Uterus (tissue), 4 donors: ENCODE measurements at regions of chr12 and their contacts with region 1.

Region 1: DNA sequence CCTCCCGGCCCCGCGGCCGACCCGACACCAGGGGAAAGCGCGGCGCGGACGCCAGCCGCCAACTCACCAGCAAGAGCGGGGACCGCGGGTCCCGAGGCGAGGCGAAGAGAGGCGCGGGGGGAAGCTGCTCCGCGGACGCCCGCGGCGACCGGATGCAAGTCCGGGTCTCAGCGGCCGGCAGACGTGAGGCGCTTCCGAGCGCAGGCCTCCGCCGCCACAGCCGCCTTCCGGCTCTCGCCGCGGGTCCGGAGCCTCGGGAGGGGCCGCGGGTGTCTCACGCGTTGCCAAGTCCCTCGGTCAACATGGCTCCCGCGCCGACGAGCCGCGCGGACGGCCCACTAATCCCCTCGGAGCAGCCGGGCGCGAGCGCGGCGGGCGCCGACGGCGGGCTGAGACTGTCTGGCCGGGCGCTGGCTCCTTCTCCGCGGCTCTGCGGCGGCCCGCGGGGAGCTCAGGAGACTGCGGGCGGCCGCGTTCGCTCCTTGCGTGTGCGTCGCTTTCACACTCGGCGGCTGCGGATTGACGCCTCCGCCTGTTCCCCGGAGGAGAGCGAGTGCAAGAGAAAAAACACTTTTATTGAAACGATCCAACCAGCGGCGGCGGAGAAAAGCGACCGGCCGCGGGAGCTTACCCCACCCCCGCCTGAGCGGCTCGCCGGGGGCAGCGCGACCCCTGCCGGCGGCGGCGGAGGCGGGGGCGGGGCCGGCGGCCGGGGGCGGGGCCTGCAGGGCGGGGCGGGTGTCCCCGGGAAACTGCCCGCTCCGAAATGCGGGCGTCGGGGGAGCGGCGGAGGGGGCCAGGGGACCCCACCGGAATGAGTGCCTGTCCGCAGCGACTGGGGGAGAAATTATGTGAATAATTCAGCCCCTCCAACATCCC is at the start of gene CDK17:
- DNase-seq: peak; percentile 87
- H3K4me3 ChIP-seq: peak within 1 kb of the TSS; percentile 76 to 98
- H3K27ac ChIP-seq: peak within 1 kb of the TSS; percentile 98 to 99
- H3K4me1 ChIP-seq: peaks cover 0 to 3% of the 10 kb centered on the region in 2 donors
- H3K27me3 ChIP-seq: no peaks in the 10 kb centered on the region
- CTCF ChIP-seq: peak; percentile 19 to 77 (median 68)
- POLR2A ChIP-seq: peak; percentile 71 to 81
- total RNA-seq, gene CDK17: 93.5 to 105 (median 102) TPM

Region 2: GRCh38 chr12:96237465-96238077 is 162.6 kb before region 1 on chr12:
- intact Hi-C with region 1: loop called (anchors 10 kb)
- DNase-seq: peak; percentile 81 to 86
- H3K4me3 ChIP-seq: no peak overlapping the region
- H3K27ac ChIP-seq: peak overlapping the region; percentile 88 to 96
- H3K4me1 ChIP-seq: peaks cover 45 to 53% of the 10 kb centered on the region in 2 donors
- H3K27me3 ChIP-seq: no peaks in the 10 kb centered on the region
- CTCF ChIP-seq: no peak
- POLR2A ChIP-seq: no peak

Region 3: GRCh38 chr12:96489103-96490056 is 89.2 kb after region 1 on chr12 and contains the start of gene CFAP54:
- intact Hi-C with region 1: loop called (anchors 10 kb)
- DNase-seq: peak; percentile 94
- H3K4me3 ChIP-seq: peak within 1 kb of the TSS; percentile 50 to 58
- H3K27ac ChIP-seq: peak within 1 kb of the TSS; percentile 49 to 83
- H3K4me1 ChIP-seq: no peaks in the 10 kb centered on the region
- H3K27me3 ChIP-seq: no peaks in the 10 kb centered on the region
- CTCF ChIP-seq: peak; percentile 90 to 96 (median 92)
- POLR2A ChIP-seq: peak in 1 of 2 donors; percentile 46
- total RNA-seq, gene CFAP54: 1.3 to 14.2 (median 6.2) TPM